Testis (tissue), 5 donors: ENCODE measurements at regions of chr5 and their contacts with region 1.

Region 1: GRCh38 chr5:65481635-65482295 is at the start of gene ADAMTS6:
- DNase-seq: peak; percentile 94
- H3K4me3 ChIP-seq: peak within 1 kb of the TSS; percentile 57 to 69
- H3K27ac ChIP-seq: peak within 1 kb of the TSS; percentile 86 to 96
- H3K4me1 ChIP-seq: peaks cover 6% of the 10 kb centered on the region
- H3K27me3 ChIP-seq: no peaks in the 10 kb centered on the region
- CTCF ChIP-seq: no peak
- POLR2A ChIP-seq: peak; percentile 47
- total RNA-seq, gene ADAMTS6: 25.5 to 43.1 TPM

Region 2: GRCh38 chr5:64811050-64811640 is 670.6 kb before region 1 on chr5:
- intact Hi-C with region 1: loop called (anchors 10 kb)
- DNase-seq: no peak
- H3K4me3 ChIP-seq: no peak overlapping the region
- H3K27ac ChIP-seq: no peak overlapping the region
- H3K4me1 ChIP-seq: no peaks in the 10 kb centered on the region
- H3K27me3 ChIP-seq: no peaks in the 10 kb centered on the region
- CTCF ChIP-seq: peak; percentile 37 to 51 (median 41)
- POLR2A ChIP-seq: no peak

Region 3: DNA sequence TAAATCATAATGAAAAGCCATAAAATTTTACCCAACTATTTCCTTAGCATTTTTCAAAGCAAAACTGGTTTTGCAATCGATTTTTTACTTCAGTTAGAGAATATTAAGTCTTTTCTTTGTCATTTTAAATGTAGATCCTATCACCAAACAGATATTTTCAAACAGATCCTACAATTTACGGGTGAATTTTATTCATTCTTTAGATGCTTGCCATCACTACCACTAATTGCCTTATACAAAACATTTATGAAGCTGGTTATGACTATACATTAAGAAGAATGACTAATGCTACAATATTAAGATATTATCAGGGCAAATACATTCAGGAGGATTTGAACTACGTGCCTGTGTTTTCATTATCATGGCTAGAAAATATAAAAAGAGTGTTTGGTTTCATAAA is 516.2 kb before region 1 on chr5:
- intact Hi-C with region 1: loop called (anchors 10 kb)
- DNase-seq: no peak
- H3K4me3 ChIP-seq: no peak overlapping the region
- H3K27ac ChIP-seq: no peak overlapping the region
- H3K4me1 ChIP-seq: no peaks in the 10 kb centered on the region
- H3K27me3 ChIP-seq: no peaks in the 10 kb centered on the region
- CTCF ChIP-seq: no peak
- POLR2A ChIP-seq: no peak

Region 4: DNA sequence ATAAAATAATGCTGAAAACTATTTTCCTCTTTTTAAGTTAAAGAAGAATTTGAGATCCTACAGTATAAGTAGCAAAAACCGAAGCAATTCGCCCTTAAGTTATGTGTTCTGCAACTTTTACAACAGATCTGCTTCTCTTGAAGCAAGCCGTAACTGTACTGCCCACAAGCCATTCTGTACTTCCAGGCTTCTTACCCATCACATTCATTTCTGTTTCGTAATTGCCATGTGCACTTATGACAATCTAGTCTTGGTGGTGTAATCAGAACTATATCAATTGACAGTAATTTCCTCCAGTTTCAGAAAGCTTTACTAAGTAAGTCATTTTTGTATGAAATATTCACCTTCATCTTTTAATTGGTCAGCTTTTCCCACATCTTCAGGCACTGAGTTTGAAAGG is 226.4 kb after region 1 on chr5:
- intact Hi-C with region 1: no loop called
- DNase-seq: no peak
- H3K4me3 ChIP-seq: no peak overlapping the region
- H3K27ac ChIP-seq: no peak overlapping the region
- H3K4me1 ChIP-seq: no peaks in the 10 kb centered on the region
- H3K27me3 ChIP-seq: no peaks in the 10 kb centered on the region
- CTCF ChIP-seq: no peak
- POLR2A ChIP-seq: no peak